CD4-positive, alpha-beta memory T cell (primary cell): ENCODE measurements at regions of chr3 and their contacts with region 1.

Region 1: DNA sequence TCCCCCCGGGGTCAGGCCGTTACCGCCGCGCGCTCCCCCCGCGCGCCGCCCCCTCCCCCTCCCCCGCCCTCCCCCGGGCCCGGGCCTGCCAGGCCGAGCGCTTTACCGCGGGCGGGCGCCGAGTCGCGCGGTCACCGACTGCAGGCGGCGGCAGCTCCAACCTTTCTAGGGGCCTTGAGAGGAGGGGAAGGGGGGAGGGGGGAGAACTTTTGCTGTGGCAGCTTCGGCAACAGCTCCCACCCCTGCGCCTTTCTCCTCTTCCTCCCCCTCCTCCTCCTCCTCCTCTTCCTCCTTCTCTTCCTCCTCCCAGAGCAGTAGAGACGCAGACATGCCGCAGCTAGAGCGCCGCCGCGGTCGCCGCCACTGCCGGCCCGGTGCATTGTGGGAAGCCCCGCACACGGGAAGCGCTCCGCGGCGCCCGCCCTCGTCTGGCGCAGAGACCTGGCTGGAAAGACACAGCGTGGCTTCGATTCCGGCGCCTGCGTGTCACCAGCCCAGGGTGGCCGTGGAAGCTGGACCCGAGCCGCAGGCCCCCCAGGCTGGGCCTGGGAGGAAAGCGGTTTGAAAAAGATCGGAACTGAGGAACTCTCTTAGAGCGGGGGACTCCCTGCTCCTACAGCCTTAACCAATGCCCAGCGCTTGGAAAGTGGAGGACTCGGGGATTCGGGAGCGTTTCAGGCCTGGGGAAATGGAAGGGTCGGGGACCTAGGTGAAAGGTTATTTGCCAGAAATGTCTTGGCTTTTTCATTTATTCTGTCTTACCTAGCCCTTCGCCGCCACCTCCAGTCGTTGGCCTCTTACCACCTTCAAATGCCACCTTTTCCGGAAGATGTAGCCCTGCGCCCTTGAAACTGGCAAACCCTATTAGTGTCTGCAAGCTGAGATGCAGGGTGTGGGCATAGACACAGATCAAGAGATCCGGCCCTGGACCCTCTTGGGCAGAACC is at the start of gene ZNF148:
- DNase-seq: peak; percentile 90 to 93 (median 92)
- H3K4me3 ChIP-seq: peak within 1 kb of the TSS; percentile 77 to 93
- H3K4me3 Mint-ChIP-seq: peak within 1 kb of the TSS; percentile 93 to 100 (median 97)
- H3K27ac ChIP-seq: peak within 1 kb of the TSS; percentile 94
- H3K27ac Mint-ChIP-seq: peak within 1 kb of the TSS; percentile 97 to 100 (median 98)
- H3K4me1 ChIP-seq: peaks cover 33% of the 10 kb centered on the region
- H3K4me1 Mint-ChIP-seq: peaks cover 28 to 53% (median 42%) of the 10 kb centered on the region in 4 donors
- H3K27me3 ChIP-seq: no peaks in the 10 kb centered on the region
- H3K27me3 Mint-ChIP-seq: no peaks in the 10 kb centered on the region
- total RNA-seq, gene ZNF148: 60.6 to 61.4 TPM

Region 2: GRCh38 chr3:124730129-124730940 is 644.9 kb before region 1 on chr3 and contains the start of gene UMPS:
- CTCF ChIA-PET with region 1: no interaction called
- POLR2A ChIA-PET with region 1: interaction called, 3 read pairs
- intact Hi-C with region 1: loop called (anchors 1 kb)
- DNase-seq: peak; percentile 89 to 93 (median 90)
- H3K4me3 ChIP-seq: peak within 1 kb of the TSS; percentile 77 to 85
- H3K4me3 Mint-ChIP-seq: peak within 1 kb of the TSS; percentile 97 to 100 (median 99)
- H3K27ac ChIP-seq: peak within 1 kb of the TSS; percentile 63
- H3K27ac Mint-ChIP-seq: peak within 1 kb of the TSS; percentile 95 to 100 (median 99)
- H3K4me1 ChIP-seq: peaks cover 36% of the 10 kb centered on the region
- H3K4me1 Mint-ChIP-seq: peaks cover 25 to 41% (median 32%) of the 10 kb centered on the region in 4 donors
- H3K27me3 ChIP-seq: peaks cover 6% of the 10 kb centered on the region
- H3K27me3 Mint-ChIP-seq: peaks cover 4 to 9% of the 10 kb centered on the region in 2 donors
- total RNA-seq, gene UMPS: 25.5 to 31.5 TPM

Region 3: GRCh38 chr3:125141596-125142419 is 233.5 kb before region 1 on chr3:
- CTCF ChIA-PET with region 1: no interaction called
- POLR2A ChIA-PET with region 1: interaction called, 3 read pairs
- intact Hi-C with region 1: loop called (anchors 10 kb)
- DNase-seq: peak; percentile 56 to 66 (median 64)
- H3K4me3 ChIP-seq: peak overlapping the region; percentile 11 to 38
- H3K4me3 Mint-ChIP-seq: peak overlapping the region; percentile 65 to 86 (median 79)
- H3K27ac ChIP-seq: peak overlapping the region; percentile 29
- H3K27ac Mint-ChIP-seq: peak overlapping the region; percentile 64 to 77 (median 70)
- H3K4me1 ChIP-seq: peaks cover 21% of the 10 kb centered on the region
- H3K4me1 Mint-ChIP-seq: peaks cover 13 to 36% (median 24%) of the 10 kb centered on the region in 4 donors
- H3K27me3 ChIP-seq: no peaks in the 10 kb centered on the region
- H3K27me3 Mint-ChIP-seq: no peaks in the 10 kb centered on the region

Region 4: DNA sequence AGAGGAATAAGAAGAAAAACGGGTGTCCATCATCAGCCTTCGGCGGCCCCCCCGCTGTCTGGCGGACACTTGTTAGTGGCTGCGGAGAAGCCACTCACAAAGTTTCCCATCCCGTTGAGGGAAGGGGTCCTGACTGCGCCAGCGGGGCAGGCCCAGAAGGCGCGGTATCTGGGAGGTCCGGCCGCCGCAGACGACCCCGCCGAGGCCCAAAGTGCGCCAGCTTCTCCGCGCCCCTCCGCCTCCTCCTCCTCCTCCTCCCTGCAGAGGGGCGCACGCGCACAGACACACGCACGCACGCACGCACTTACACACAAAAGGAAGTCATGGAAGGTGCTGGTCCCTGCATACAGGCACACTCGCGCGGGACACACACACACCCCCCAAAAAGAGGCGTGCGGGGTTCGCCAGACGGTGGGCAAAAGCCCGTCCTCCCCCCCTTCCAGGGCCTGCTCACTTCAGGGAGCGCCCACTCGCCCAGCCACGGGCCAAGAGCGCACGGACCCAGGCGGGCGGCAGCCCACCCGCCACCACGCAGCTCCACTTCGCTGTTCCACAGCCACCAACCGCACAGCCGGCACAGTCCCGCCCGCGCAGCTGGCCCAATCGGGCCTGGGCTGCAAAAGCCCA is 18.1 kb before region 1 on chr3:
- CTCF ChIA-PET with region 1: interaction called, 3 read pairs
- POLR2A ChIA-PET with region 1: no interaction called
- intact Hi-C with region 1: loop called (anchors 2 kb)
- DNase-seq: peak; percentile 26 to 68 (median 47)
- H3K4me3 ChIP-seq: peak overlapping the region in 1 of 2 donors; percentile 44
- H3K4me3 Mint-ChIP-seq: peak overlapping the region; percentile 78 to 89 (median 82)
- H3K27ac ChIP-seq: no peak overlapping the region
- H3K27ac Mint-ChIP-seq: peak overlapping the region in 6 of 7 donors; percentile 24 to 90 (median 76)
- H3K4me1 ChIP-seq: peaks cover 71% of the 10 kb centered on the region
- H3K4me1 Mint-ChIP-seq: peaks cover 52 to 85% (median 64%) of the 10 kb centered on the region in 4 donors
- H3K27me3 ChIP-seq: no peaks in the 10 kb centered on the region
- H3K27me3 Mint-ChIP-seq: no peaks in the 10 kb centered on the region

Region 5: DNA sequence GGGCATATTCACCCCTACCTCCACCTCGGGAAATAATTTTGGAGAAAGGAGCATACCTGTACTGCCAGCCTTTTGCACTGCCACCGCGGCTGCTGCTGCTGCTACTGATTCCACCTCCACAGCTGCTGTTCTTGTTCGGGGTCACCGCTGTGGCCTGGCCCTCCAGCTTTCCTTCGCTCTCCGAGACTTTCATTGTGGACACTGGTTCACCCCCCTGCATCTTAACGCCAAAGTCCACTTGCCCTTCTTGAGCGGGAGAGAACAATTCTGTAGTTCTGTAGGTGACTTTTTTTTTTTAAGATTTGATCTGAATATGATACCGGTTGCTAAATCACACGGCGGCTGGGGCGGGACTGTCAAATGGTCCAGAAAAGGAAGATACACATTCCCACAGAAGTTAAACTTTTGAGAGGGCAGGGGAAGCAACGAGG is 219.3 kb after region 1 on chr3:
- CTCF ChIA-PET with region 1: no interaction called
- POLR2A ChIA-PET with region 1: interaction called, 11 read pairs
- intact Hi-C with region 1: loop called (anchors 1 kb)
- DNase-seq: peak in 1 of 5 donors; percentile 2
- H3K4me3 ChIP-seq: peak overlapping the region; percentile 43 to 80
- H3K4me3 Mint-ChIP-seq: peak overlapping the region; percentile 88 to 100 (median 98)
- H3K27ac ChIP-seq: peak overlapping the region; percentile 75
- H3K27ac Mint-ChIP-seq: peak overlapping the region; percentile 88 to 99 (median 93)
- H3K4me1 ChIP-seq: peaks cover 52% of the 10 kb centered on the region
- H3K4me1 Mint-ChIP-seq: peaks cover 25 to 55% (median 40%) of the 10 kb centered on the region in 4 donors
- H3K27me3 ChIP-seq: no peaks in the 10 kb centered on the region
- H3K27me3 Mint-ChIP-seq: no peaks in the 10 kb centered on the region